ENCODE measurements at regions of chr14 and their contacts with region 1.

Region 1: GRCh38 chr14:34671716-34672115 is 41.8 kb upstream of the SNX6 start:
- DNase-seq: no peak
- H3K4me3 ChIP-seq: no peak overlapping the region
- H3K27ac ChIP-seq: no peak overlapping the region
- H3K4me1 ChIP-seq: no peaks in the 10 kb centered on the region
- H3K27me3 ChIP-seq: no peaks in the 10 kb centered on the region
- CTCF ChIP-seq: no peak

Region 2: GRCh38 chr14:34722717-34723545 is 51.2 kb after region 1 on chr14:
- intact Hi-C with region 1: loop called (anchors 1 kb)
- DNase-seq: peak in 1 of 2 donors; percentile 68
- H3K4me3 ChIP-seq: no peak overlapping the region
- H3K27ac ChIP-seq: no peak overlapping the region
- H3K4me1 ChIP-seq: peaks cover 0 to 3% of the 10 kb centered on the region in 2 donors
- H3K27me3 ChIP-seq: no peaks in the 10 kb centered on the region
- CTCF ChIP-seq: peak; percentile 67 to 83 (median 78)